PC-9 (cell line): ENCODE measurements at regions of chr9 and their contacts with region 1.

Region 1: GRCh38 chr9:68966496-68966944 is 47.4 kb downstream of the PRKACG start:
- DNase-seq: no peak
- H3K4me3 ChIP-seq: no peak overlapping the region
- H3K27ac ChIP-seq: no peak overlapping the region
- H3K4me1 ChIP-seq: no peaks in the 10 kb centered on the region
- H3K27me3 ChIP-seq: peaks cover 59% of the 10 kb centered on the region
- CTCF ChIP-seq: no peak

Region 2: GRCh38 chr9:68919661-68920060 is 46.9 kb before region 1 on chr9:
- CTCF ChIA-PET with region 1: no interaction called
- POLR2A ChIA-PET with region 1: no interaction called
- intact Hi-C with region 1: loop called (anchors 10 kb)
- DNase-seq: no peak
- H3K4me3 ChIP-seq: no peak overlapping the region
- H3K27ac ChIP-seq: no peak overlapping the region
- H3K4me1 ChIP-seq: no peaks in the 10 kb centered on the region
- H3K27me3 ChIP-seq: peaks cover 52% of the 10 kb centered on the region
- CTCF ChIP-seq: no peak